WTC11 (cell line): ENCODE measurements at regions of chr15 and their contacts with region 1.

Region 1: DNA sequence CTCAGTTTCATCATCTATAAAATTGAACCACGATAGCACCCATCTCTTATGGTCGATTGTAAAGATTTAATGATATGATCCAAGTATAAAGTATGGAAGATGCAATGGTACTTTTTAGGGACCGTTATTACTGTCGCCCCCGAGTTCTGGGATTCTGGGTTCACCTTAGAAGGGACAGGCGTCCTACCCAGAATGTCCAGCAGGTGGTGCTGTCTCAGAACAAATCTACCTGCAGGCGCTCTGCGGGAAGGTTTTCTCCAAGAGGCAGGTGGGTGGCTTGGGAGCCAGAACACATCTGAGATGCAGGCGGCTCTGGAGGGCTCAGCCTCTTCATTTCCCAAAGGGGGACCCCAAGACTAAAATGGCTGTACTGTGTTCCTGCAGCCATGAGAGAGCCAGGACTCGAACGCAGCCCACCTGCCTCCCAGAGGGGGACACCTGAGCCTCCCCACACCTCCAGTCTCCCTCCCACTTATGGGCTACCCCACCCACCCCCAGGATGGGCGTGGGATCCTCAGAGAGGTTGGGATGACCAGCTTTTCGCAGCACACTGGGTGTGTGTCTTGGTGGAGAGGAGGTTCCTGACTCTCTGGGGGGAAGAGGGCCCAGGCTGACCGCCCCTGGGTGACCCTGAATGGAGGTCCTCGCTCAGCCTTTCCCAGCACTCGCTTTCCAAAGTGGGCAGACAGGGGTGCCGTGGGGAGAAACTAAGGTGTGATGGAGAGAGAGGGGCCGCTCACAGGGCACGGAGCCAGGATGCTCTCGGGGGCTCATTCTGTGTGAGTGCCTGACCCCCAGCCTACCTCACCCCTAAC is 28.1 kb upstream of the CORO2B start:
- DNase-seq: peak; percentile 94
- ATAC-seq: peak; percentile 79
- H3K4me3 Mint-ChIP-seq: no peak overlapping the region
- H3K27ac Mint-ChIP-seq: no peak overlapping the region
- H3K4me1 Mint-ChIP-seq: no peaks in the 10 kb centered on the region
- H3K27me3 Mint-ChIP-seq: peaks cover 10% of the 10 kb centered on the region
- CTCF ChIP-seq: peak; percentile 94

Region 2: GRCh38 chr15:68465861-68466560 is 84.7 kb before region 1 on chr15:
- CTCF ChIA-PET with region 1: interaction called, 10 read pairs
- POLR2A ChIA-PET with region 1: no interaction called
- DNase-seq: no peak
- ATAC-seq: no peak
- H3K4me3 Mint-ChIP-seq: no peak overlapping the region
- H3K27ac Mint-ChIP-seq: no peak overlapping the region
- H3K4me1 Mint-ChIP-seq: no peaks in the 10 kb centered on the region
- H3K27me3 Mint-ChIP-seq: no peaks in the 10 kb centered on the region
- CTCF ChIP-seq: no peak

Region 3: GRCh38 chr15:68500363-68501258 is 50.1 kb before region 1 on chr15:
- CTCF ChIA-PET with region 1: no interaction called
- POLR2A ChIA-PET with region 1: no interaction called
- DNase-seq: no peak
- ATAC-seq: no peak
- H3K4me3 Mint-ChIP-seq: no peak overlapping the region
- H3K27ac Mint-ChIP-seq: no peak overlapping the region
- H3K4me1 Mint-ChIP-seq: peaks cover 4% of the 10 kb centered on the region
- H3K27me3 Mint-ChIP-seq: peaks cover 6% of the 10 kb centered on the region; the same call in 1 of the 2 replicates
- CTCF ChIP-seq: no peak

Region 4: DNA sequence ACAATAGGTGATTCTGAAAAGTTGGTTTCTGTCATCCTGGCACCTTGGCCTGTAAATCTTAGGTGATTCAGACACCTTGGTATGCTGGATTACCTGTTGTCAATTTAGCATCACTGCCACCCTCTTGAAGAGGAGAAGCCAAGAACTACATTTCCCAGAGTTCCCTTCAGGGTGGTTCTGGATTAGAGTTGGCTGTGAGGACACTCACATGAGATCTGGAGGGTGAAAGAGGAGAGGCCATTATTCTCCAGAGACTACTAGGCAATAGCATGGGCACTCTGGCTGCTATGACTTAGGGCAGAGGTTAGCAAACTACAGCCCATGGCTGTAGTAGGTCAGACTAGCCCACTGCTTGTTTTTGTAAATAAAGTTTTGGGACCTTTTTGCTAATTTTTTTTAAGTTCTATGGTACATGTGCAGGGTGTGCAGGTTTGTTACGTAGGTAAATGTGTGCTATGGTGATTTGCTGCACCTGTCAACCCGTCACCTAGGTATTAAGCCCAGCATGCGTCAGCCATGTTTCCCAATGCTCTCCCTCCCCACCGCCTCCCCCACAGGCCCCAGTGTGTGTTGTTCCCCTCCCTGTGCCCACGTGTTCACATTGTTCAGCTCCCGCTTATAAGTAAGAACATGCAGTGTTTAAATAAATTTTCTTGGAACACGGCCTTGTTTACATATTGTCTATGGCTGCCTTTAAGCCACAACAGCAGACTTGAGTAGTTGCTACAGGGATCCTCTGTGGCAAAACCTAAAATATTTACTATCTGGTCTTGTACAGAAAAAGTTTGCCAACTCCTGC is 13.4 kb before region 1 on chr15:
- CTCF ChIA-PET with region 1: interaction called, 19 read pairs
- POLR2A ChIA-PET with region 1: no interaction called
- DNase-seq: no peak
- ATAC-seq: peak; percentile 73
- H3K4me3 Mint-ChIP-seq: no peak overlapping the region
- H3K27ac Mint-ChIP-seq: no peak overlapping the region
- H3K4me1 Mint-ChIP-seq: no peaks in the 10 kb centered on the region
- H3K27me3 Mint-ChIP-seq: peaks cover 6% of the 10 kb centered on the region
- CTCF ChIP-seq: no peak

Region 5: GRCh38 chr15:68631601-68632051 is 80.9 kb after region 1 on chr15:
- CTCF ChIA-PET with region 1: interaction called, 10 read pairs
- POLR2A ChIA-PET with region 1: no interaction called
- DNase-seq: peak; percentile 63
- ATAC-seq: peak; percentile 85
- H3K4me3 Mint-ChIP-seq: no peak overlapping the region
- H3K27ac Mint-ChIP-seq: no peak overlapping the region
- H3K4me1 Mint-ChIP-seq: peaks cover 24% of the 10 kb centered on the region
- H3K27me3 Mint-ChIP-seq: no peaks in the 10 kb centered on the region
- CTCF ChIP-seq: no peak

Region 6: DNA sequence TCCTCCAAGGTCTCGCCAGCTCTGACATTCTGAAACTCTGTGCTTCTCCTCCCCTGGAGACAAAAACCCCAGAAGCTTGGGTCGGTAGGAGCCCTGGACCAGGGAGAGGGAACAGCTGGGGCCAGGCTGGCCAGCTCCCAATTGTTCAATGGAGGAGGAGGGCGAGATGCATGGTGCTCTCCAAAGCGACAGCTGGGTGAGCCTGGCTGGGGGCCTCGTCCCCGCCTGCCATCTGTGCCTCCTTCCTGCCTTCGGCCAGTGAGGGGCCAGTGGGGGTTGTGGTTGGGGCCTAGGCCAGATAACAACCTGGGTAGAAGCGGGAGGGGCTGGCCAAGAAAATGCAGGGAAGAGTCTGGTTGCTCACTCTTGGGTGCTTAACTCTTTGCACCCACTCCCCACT is 107.5 kb after region 1 on chr15:
- CTCF ChIA-PET with region 1: interaction called, 48 read pairs
- POLR2A ChIA-PET with region 1: no interaction called
- DNase-seq: no peak
- ATAC-seq: no peak
- H3K4me3 Mint-ChIP-seq: no peak overlapping the region
- H3K27ac Mint-ChIP-seq: no peak overlapping the region
- H3K4me1 Mint-ChIP-seq: peaks cover 29% of the 10 kb centered on the region
- H3K27me3 Mint-ChIP-seq: no peaks in the 10 kb centered on the region
- CTCF ChIP-seq: no peak

Region 7: DNA sequence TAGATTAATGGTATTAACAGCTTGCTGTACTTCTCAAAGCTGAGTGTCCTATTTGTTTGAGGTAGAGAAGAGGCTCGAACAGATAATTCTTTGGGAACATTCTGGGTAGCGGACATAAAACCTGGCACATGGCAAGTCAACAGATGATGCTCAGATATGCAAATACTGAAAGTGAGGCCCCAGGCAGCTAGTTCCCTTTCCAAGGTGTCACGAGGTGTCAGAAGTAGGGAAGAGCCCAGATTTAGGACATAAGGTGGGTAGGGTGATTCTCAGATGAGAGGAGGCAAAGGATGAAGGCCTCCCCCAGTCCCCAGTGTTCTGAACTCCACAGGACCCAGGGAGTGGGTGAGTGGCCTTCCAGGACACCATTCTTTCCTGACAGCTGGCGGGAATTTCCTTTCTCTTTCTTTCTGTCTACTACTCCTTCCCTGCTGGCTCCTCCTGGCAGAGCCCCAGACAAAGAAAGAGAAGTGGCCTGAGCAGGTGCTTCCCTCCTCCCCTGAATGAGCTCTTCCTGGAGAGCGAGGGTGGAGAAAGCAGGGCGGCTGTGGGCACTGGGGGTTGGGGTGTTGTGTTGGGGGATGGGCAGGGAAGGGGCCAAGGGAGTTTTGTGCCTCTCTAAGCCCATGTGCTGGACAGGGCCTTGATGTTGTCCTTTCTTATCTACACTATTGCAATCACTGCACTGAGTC is 115.6 kb after region 1 on chr15:
- CTCF ChIA-PET with region 1: interaction called, 17 read pairs
- POLR2A ChIA-PET with region 1: no interaction called
- DNase-seq: peak; percentile 24
- ATAC-seq: peak; percentile 93
- H3K4me3 Mint-ChIP-seq: no peak overlapping the region
- H3K27ac Mint-ChIP-seq: no peak overlapping the region; the same call in none of the 2 replicates
- H3K4me1 Mint-ChIP-seq: peaks cover 18% of the 10 kb centered on the region
- H3K27me3 Mint-ChIP-seq: no peaks in the 10 kb centered on the region; the same call in 1 of the 2 replicates
- CTCF ChIP-seq: no peak

Region 8: GRCh38 chr15:68700455-68701123 is 149.9 kb after region 1 on chr15:
- CTCF ChIA-PET with region 1: interaction called, 10 read pairs
- POLR2A ChIA-PET with region 1: no interaction called
- DNase-seq: peak; percentile 33
- ATAC-seq: peak; percentile 71
- H3K4me3 Mint-ChIP-seq: peak overlapping the region; percentile 38
- H3K27ac Mint-ChIP-seq: no peak overlapping the region; the same call in 1 of the 2 replicates
- H3K4me1 Mint-ChIP-seq: peaks cover 26% of the 10 kb centered on the region
- H3K27me3 Mint-ChIP-seq: peaks cover 4% of the 10 kb centered on the region; the same call in 1 of the 2 replicates
- CTCF ChIP-seq: no peak